Endothelial cell of umbilical vein (primary cell): ENCODE measurements at regions of chr17 and their contacts with region 1.

Region 1: DNA sequence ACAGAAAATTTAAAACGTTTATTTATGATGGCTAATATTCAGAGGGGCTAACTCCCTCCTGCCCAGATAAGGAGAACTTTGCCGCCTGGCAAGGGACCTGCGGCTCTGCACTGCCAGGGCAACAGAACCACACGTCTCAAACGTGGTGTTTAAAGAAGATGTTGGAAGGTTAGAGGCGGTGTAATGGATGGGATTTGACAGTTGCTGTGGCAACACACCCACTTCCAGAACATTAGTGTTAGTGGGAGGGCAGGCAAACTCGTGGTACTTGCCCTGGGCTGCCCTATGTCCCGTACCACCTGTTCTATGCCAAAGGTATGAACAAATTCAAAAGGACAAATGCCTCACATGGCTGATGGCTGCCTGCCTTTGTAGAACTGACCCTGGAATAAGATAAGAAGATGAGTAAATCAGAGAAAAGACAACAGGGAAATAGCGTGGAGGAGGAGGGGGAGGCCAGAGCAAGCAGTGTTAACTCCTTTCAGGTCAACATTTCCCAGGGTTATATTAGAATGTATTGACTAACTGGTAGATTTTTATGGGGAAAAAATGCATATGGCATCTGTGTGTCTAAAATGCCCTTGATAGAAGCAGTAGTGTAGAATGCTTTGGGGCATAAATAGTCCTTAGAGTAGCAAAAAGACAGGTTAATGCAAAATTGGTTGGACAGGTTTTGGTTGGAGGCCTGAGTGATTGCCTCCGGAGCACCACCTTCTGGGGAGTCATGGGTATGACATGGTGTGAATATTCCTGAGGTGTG is 30.8 kb downstream of the HLF start:
- DNase-seq: peak; percentile 65
- H3K4me3 ChIP-seq: no peak overlapping the region
- H3K27ac ChIP-seq: no peak overlapping the region
- H3K4me1 ChIP-seq: no peaks in the 10 kb centered on the region
- H3K27me3 ChIP-seq: no peaks in the 10 kb centered on the region
- CTCF ChIP-seq: peak; percentile 68 to 82
- POLR2A ChIP-seq: no peak

Region 2: GRCh38 chr17:55134486-55135157 is 161.0 kb before region 1 on chr17:
- CTCF ChIA-PET with region 1: no interaction called
- POLR2A ChIA-PET with region 1: no interaction called
- dilution Hi-C with region 1: no loop called
- intact Hi-C with region 1: no loop called
- DNase-seq: no peak
- H3K4me3 ChIP-seq: no peak overlapping the region
- H3K27ac ChIP-seq: no peak overlapping the region
- H3K4me1 ChIP-seq: no peaks in the 10 kb centered on the region
- H3K27me3 ChIP-seq: no peaks in the 10 kb centered on the region
- CTCF ChIP-seq: no peak
- POLR2A ChIP-seq: no peak

Region 3: GRCh38 chr17:55348749-55349354 is 53.3 kb after region 1 on chr17:
- CTCF ChIA-PET with region 1: interaction called, 13 read pairs
- POLR2A ChIA-PET with region 1: no interaction called
- dilution Hi-C with region 1: no loop called
- intact Hi-C with region 1: no loop called
- DNase-seq: peak; percentile 56
- H3K4me3 ChIP-seq: no peak overlapping the region
- H3K27ac ChIP-seq: no peak overlapping the region
- H3K4me1 ChIP-seq: no peaks in the 10 kb centered on the region
- H3K27me3 ChIP-seq: peaks cover 6 to 7% of the 10 kb centered on the region in 2 experiments
- CTCF ChIP-seq: peak; percentile 62 to 84
- POLR2A ChIP-seq: no peak